ENCODE measurements at regions of chr17 and their contacts with region 1.

Region 1: DNA sequence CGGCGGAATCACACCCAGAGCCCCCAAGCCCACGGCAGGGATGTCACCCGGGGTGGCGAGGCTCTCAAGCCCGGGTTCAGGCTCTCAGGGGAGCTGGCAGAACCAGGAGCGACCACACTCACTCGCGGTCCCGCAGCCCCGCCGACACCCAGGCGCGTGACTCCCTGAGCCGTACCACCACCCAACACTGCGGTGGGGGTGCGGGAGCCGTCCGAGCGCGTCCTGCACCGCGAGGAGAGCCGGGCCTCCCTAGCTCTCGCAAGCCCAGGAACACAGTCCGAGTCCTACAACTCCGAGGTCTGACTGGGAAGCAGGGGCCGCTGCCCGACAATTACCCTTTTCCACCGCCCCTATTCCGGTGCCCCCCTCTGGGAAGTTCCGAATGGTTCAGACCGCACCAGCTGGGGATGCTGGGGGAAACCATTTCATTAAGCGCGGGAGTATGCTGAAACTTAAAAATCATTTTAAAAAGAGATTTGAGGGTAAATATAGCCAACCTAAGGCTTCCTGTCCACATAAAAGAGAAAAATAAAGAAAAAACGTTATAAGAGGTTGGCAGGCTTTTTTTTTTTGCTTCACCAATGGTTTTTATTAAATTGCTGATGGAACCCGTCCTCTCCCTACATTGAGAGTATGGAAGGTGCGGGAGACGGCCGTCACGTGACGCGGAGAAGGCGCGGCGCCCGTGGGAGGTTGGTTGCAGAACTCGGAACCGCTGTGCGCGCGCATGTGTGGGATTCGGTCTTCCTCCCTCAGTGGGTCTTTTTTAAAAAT is at the start of gene FLCN:
- DNase-seq: peak; percentile 76 to 94 (median 90)
- ATAC-seq: peak; percentile 90
- H3K4me3 ChIP-seq: peak within 1 kb of the TSS; percentile 80 to 94
- H3K4me3 Mint-ChIP-seq: peak within 1 kb of the TSS; percentile 95
- H3K27ac ChIP-seq: peak within 1 kb of the TSS; percentile 97 to 98
- H3K27ac Mint-ChIP-seq: peak within 1 kb of the TSS; percentile 99
- H3K4me1 ChIP-seq: peaks cover 23% of the 10 kb centered on the region
- H3K4me1 Mint-ChIP-seq: peaks cover 29% of the 10 kb centered on the region
- H3K27me3 ChIP-seq: no peaks in the 10 kb centered on the region
- H3K27me3 Mint-ChIP-seq: no peaks in the 10 kb centered on the region
- CTCF ChIP-seq: no peak
- total RNA-seq, gene FLCN: 13.4 to 14.6 TPM

Region 2: GRCh38 chr17:17001874-17002520 is 235.2 kb before region 1 on chr17:
- CTCF ChIA-PET with region 1: no interaction called
- POLR2A ChIA-PET with region 1: no interaction called
- intact Hi-C with region 1: loop called (anchors 5 kb)
- DNase-seq: peak; percentile 58 to 86 (median 77)
- ATAC-seq: peak; percentile 98
- H3K4me3 ChIP-seq: no peak overlapping the region
- H3K4me3 Mint-ChIP-seq: no peak overlapping the region
- H3K27ac ChIP-seq: no peak overlapping the region
- H3K27ac Mint-ChIP-seq: no peak overlapping the region
- H3K4me1 ChIP-seq: no peaks in the 10 kb centered on the region
- H3K4me1 Mint-ChIP-seq: peaks cover 1% of the 10 kb centered on the region
- H3K27me3 ChIP-seq: no peaks in the 10 kb centered on the region
- H3K27me3 Mint-ChIP-seq: no peaks in the 10 kb centered on the region
- CTCF ChIP-seq: peak; percentile 89

Region 3: DNA sequence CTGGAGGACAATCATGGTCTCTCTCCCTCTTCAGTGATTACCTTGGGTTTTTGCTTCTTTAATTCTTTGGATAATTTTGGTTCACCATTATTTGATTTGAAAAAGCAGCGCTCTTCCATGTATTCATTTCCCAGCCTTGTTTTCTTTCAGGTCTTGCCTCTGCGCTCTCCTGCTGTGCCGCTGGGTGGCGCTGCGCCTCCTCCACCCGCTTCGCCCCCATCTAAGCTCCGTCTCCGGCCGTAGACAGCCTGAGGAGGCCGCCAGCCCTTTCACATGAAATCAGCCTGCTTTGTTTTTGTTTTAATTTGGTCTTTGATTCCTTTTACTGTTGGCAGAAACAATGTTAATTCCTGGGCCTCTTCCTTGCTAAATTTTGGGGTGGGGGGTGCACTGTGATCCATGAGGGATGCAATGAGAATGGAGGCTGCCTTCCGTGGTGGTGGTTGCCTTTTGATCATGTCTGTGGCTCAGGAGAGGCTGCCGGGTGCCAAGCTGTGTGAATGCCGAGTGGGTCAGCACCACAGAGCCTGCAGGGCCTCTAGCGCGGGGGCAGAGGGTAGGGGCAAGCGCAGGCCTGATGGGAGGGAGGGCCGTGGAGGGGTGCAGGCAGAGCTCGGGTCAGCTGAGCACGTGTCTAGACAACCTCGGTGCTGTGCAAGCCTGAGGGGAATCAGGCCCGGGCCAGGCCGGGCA is 95.2 kb before region 1 on chr17:
- CTCF ChIA-PET with region 1: interaction called, 4 read pairs
- POLR2A ChIA-PET with region 1: interaction called, 3 read pairs
- intact Hi-C with region 1: loop called in 1 of 2 experiments (anchors 5 kb)
- DNase-seq: peak; percentile 19 to 64 (median 55)
- ATAC-seq: peak; percentile 80
- H3K4me3 ChIP-seq: no peak overlapping the region
- H3K4me3 Mint-ChIP-seq: no peak overlapping the region
- H3K27ac ChIP-seq: no peak overlapping the region
- H3K27ac Mint-ChIP-seq: peak overlapping the region; percentile 77
- H3K4me1 ChIP-seq: no peaks in the 10 kb centered on the region
- H3K4me1 Mint-ChIP-seq: peaks cover 8% of the 10 kb centered on the region
- H3K27me3 ChIP-seq: no peaks in the 10 kb centered on the region
- H3K27me3 Mint-ChIP-seq: no peaks in the 10 kb centered on the region
- CTCF ChIP-seq: peak; percentile 58

Region 4: GRCh38 chr17:17179371-17179827 is 57.8 kb before region 1 on chr17:
- CTCF ChIA-PET with region 1: interaction called, 5 read pairs
- POLR2A ChIA-PET with region 1: interaction called, 8 read pairs
- intact Hi-C with region 1: loop called (anchors 2 to 5 kb)
- DNase-seq: peak in 4 of 9 experiments; percentile 35 to 74 (median 57)
- ATAC-seq: peak; percentile 65
- H3K4me3 ChIP-seq: peak overlapping the region in 1 of 2 experiments; percentile 7
- H3K4me3 Mint-ChIP-seq: peak overlapping the region; percentile 71
- H3K27ac ChIP-seq: peak overlapping the region; percentile 26 to 41
- H3K27ac Mint-ChIP-seq: peak overlapping the region; percentile 97
- H3K4me1 ChIP-seq: peaks cover 94% of the 10 kb centered on the region
- H3K4me1 Mint-ChIP-seq: peaks cover 84% of the 10 kb centered on the region
- H3K27me3 ChIP-seq: no peaks in the 10 kb centered on the region
- H3K27me3 Mint-ChIP-seq: no peaks in the 10 kb centered on the region
- CTCF ChIP-seq: no peak

Region 5: GRCh38 chr17:17280613-17281549 is 43.7 kb after region 1 on chr17 and contains the start of gene COPS3:
- CTCF ChIA-PET with region 1: no interaction called
- POLR2A ChIA-PET with region 1: no interaction called
- intact Hi-C with region 1: loop called (anchors 1 kb)
- DNase-seq: peak; percentile 91 to 99 (median 97)
- ATAC-seq: peak; percentile 88
- H3K4me3 ChIP-seq: peak within 1 kb of the TSS; percentile 74 to 93
- H3K4me3 Mint-ChIP-seq: peak within 1 kb of the TSS; percentile 96
- H3K27ac ChIP-seq: peak within 1 kb of the TSS; percentile 74 to 92
- H3K27ac Mint-ChIP-seq: peak within 1 kb of the TSS; percentile 87
- H3K4me1 ChIP-seq: peaks cover 26% of the 10 kb centered on the region
- H3K4me1 Mint-ChIP-seq: peaks cover 38% of the 10 kb centered on the region
- H3K27me3 ChIP-seq: no peaks in the 10 kb centered on the region
- H3K27me3 Mint-ChIP-seq: no peaks in the 10 kb centered on the region
- CTCF ChIP-seq: no peak
- total RNA-seq, gene COPS3: 94.1 to 96.3 TPM

Region 6: DNA sequence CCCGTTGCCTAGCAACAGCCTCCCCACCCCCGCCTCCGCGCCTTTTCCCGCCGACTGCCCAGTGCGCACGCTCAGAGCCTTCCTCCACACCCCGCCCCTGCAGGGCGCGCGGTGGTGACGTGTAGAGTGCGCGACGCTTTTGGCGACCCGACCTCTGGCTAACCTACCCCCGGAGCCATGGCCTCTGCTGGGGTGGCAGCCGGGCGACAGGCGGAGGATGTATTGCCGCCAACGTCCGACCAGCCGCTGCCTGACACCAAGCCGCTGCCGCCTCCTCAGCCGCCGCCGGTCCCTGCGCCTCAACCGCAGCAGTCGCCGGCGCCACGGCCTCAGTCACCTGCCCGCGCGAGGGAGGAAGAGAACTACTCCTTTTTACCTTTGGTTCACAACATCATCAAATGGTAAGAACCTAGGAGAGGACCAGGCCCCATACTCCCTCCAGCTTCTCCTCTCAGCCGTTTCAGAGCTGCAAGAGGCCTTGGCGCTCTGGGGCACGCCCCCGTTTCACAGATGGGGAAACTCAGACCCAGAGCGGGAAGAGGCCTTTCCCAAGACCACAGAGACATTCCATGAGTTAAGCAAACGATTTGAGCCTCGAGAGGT is 239.8 kb after region 1 on chr17 and contains the start of gene MED9:
- CTCF ChIA-PET with region 1: no interaction called
- POLR2A ChIA-PET with region 1: no interaction called
- intact Hi-C with region 1: loop called in 1 of 2 experiments (anchors 5 kb)
- DNase-seq: peak; percentile 87 to 97 (median 95)
- ATAC-seq: peak; percentile 100
- H3K4me3 ChIP-seq: peak within 1 kb of the TSS; percentile 88 to 96
- H3K4me3 Mint-ChIP-seq: peak within 1 kb of the TSS; percentile 89
- H3K27ac ChIP-seq: peak within 1 kb of the TSS; percentile 83 to 89
- H3K27ac Mint-ChIP-seq: peak within 1 kb of the TSS; percentile 89
- H3K4me1 ChIP-seq: peaks cover 32% of the 10 kb centered on the region
- H3K4me1 Mint-ChIP-seq: peaks cover 46% of the 10 kb centered on the region
- H3K27me3 ChIP-seq: no peaks in the 10 kb centered on the region
- H3K27me3 Mint-ChIP-seq: no peaks in the 10 kb centered on the region
- CTCF ChIP-seq: no peak
- total RNA-seq, gene MED9: 35.4 to 35.9 TPM

Measured in CD8-positive, alpha-beta T cell (primary cell).